WTC11 (cell line): ENCODE measurements at regions of chr4 and their contacts with region 1.

Region 1: GRCh38 chr4:3514806-3515460 is 17.3 kb downstream of the LRPAP1 start:
- DNase-seq: peak; percentile 70
- ATAC-seq: peak; percentile 78
- H3K4me3 Mint-ChIP-seq: no peak overlapping the region
- H3K27ac Mint-ChIP-seq: no peak overlapping the region
- H3K4me1 Mint-ChIP-seq: peaks cover 4% of the 10 kb centered on the region; the same call in 1 of the 2 replicates
- H3K27me3 Mint-ChIP-seq: no peaks in the 10 kb centered on the region
- CTCF ChIP-seq: peak; percentile 21; the same call in 1 of the 2 replicates

Region 2: DNA sequence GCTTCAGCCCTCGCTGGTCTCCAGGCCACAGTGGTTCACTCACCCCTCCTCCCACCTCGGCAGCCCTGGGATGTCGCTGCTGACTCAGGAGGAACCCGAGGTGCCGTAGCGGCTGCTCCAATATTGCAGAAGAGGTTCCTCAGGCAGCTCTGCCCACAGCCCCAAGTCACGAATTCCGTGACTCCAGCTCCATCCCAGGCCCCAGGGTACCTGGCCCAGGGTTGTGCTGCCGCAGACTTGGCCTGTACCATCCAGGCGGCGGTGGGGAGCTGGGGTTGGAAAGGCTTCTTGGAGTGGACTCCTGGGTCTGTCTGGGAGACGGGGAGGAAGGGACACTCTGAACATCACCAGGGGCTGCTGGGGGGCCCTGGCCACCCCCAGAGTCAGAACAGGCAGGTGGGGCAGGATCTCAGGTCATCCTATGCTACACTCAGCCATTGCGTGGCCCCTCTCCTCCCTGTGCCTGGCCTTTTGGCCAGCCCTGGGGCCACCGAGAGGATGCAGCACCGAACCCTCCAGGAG is 73.9 kb before region 1 on chr4:
- CTCF ChIA-PET with region 1: no interaction called
- POLR2A ChIA-PET with region 1: no interaction called
- DNase-seq: no peak
- ATAC-seq: no peak
- H3K4me3 Mint-ChIP-seq: no peak overlapping the region
- H3K27ac Mint-ChIP-seq: no peak overlapping the region
- H3K4me1 Mint-ChIP-seq: no peaks in the 10 kb centered on the region
- H3K27me3 Mint-ChIP-seq: no peaks in the 10 kb centered on the region
- CTCF ChIP-seq: no peak

Region 3: DNA sequence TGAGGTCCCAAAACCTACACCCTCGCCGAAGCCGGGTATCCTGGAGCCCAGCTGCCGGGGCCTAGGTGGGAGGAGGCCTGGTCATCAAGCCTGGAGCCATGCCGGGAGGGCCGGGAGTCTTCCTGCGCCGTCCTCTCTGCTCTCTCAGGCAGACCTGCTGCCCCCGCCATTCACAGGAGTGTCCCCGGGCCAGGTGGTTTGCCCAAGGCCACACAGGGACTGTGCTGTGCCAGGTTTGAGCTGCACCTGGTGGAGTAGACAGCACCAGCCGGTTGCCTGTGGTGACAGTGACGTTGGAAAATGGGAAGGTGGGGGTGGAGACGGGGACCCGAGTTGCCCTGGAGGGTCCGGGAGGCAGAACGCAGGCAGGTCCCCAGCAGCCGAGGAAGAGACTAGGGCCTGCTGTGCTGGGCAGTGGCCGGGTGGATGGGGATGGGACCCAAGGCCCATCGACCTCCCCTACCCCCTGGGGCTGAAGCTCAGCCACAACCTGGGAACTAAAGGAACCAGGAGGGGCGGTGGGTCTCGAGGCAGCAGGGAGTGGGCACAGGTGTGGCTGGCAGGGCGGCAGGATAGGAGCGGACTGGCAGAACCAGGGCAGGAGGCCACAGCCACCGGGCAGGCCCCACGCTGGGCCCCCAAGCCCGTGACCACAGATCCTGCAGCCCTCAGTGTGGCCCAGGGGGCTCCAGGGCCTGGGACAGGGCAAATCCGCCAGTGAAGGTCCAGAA is 42.4 kb before region 1 on chr4:
- CTCF ChIA-PET with region 1: no interaction called
- POLR2A ChIA-PET with region 1: no interaction called
- DNase-seq: no peak
- ATAC-seq: no peak
- H3K4me3 Mint-ChIP-seq: no peak overlapping the region
- H3K27ac Mint-ChIP-seq: no peak overlapping the region
- H3K4me1 Mint-ChIP-seq: peaks cover 5% of the 10 kb centered on the region; the same call in 1 of the 2 replicates
- H3K27me3 Mint-ChIP-seq: peaks cover 45% of the 10 kb centered on the region
- CTCF ChIP-seq: no peak

Region 4: DNA sequence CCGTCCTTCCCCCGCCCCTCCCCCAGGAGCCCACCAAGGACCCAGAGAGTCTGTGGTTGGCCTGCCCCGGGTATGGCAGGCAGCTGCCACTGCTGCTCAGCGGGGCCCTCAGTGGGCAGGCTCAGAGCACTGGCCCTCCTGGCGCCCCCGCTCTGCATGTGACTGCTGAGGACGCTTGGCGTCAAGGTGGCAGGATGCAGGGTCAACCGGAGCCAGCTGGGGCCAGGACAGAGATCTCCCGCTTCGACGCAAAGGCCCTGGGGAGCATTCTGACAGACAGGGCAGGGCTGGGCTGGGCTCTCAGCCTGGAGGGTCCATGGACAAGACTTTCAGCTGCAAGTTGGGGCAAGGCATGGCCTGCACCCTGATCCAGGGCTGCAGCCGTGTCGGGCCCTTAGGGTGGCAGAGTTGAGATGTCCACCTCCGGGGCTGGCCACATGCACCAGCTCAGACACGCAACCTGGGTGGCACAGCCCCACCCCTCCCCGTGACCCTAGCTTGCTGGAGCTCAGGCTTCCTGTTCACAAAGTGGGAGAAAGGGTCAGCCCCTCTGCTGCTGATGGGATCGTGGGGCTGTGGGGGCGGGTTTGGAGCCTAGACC is 13.0 kb before region 1 on chr4:
- CTCF ChIA-PET with region 1: interaction called, 42 read pairs
- POLR2A ChIA-PET with region 1: no interaction called
- DNase-seq: no peak
- ATAC-seq: no peak
- H3K4me3 Mint-ChIP-seq: no peak overlapping the region
- H3K27ac Mint-ChIP-seq: no peak overlapping the region
- H3K4me1 Mint-ChIP-seq: no peaks in the 10 kb centered on the region
- H3K27me3 Mint-ChIP-seq: peaks cover 14% of the 10 kb centered on the region
- CTCF ChIP-seq: no peak

Region 5: DNA sequence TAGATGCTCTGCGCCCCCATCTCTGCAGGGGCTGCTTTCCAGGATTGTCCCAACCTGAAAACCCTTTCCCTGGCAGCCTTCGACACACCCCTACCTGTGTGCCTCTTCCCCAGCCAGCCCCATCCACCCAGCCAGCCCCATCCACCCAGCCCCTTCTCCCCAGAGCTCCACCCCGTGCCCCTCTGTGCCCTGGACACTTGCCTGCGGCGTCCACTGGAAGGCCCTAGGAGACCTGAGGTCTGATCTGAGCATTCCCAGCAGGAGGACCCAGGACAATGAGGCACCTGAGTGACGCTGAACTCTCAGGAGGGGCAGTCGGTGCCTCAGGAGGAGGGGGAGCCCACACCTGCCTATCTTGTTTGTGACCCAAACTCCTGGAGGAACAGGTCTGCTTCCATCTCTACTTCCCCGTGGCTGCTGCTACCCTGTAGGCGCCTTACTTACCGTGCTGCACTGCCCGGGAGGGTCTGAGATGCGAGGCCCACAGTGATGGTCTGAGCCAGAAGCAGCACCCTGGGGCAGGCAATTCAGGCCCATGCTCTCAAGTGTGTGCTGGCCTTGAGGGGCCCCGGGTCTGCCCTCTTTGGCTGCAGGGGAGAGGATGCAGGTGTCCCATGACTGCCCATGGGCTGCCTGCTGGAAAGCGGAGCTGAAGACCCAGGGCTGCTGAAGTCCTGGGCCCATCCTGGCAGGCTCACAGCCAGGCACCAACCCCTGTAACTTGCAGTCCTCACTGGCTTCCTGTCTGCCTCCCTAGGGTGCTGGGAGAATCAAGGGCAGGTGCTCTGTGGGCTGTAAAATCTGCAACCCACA is 12.4 kb after region 1 on chr4:
- CTCF ChIA-PET with region 1: interaction called, 25 read pairs
- POLR2A ChIA-PET with region 1: no interaction called
- DNase-seq: peak; percentile 8
- ATAC-seq: no peak
- H3K4me3 Mint-ChIP-seq: no peak overlapping the region
- H3K27ac Mint-ChIP-seq: no peak overlapping the region
- H3K4me1 Mint-ChIP-seq: peaks cover 12% of the 10 kb centered on the region
- H3K27me3 Mint-ChIP-seq: 0 out of 2 replicates have a peak, but pooled peaks cover 3% of the 10 kb centered on the region
- CTCF ChIP-seq: no peak